Left ventricle myocardium superior (tissue), 1 donor: ENCODE measurements at regions of chr2 and their contacts with region 1.

Region 1: GRCh38 chr2:69026026-69026425 is 13.0 kb downstream of the ANTXR1 start:
- DNase-seq: no peak
- ATAC-seq: peak; percentile 83

Region 2: DNA sequence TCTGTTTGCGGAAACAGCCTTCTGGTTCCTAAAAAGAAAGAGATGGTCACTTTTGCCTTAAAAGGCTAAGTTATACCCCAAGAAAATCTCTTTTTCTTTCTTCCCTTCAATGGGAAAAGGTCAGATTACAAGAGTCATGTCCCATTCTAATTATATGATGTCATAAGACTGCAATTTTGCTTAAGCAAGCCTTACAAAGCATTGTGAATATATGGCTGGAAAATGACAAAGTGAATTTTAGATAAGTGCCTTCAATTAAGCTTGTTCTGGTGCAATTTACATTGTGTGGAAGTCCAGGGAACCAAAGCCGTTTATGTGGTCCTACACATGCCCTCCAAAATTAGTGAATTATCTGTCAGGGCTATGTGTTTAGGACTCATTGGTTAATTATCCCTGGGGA is 147.3 kb before region 1 on chr2:
- intact Hi-C with region 1: no loop called
- DNase-seq: no peak
- ATAC-seq: no peak

Region 3: DNA sequence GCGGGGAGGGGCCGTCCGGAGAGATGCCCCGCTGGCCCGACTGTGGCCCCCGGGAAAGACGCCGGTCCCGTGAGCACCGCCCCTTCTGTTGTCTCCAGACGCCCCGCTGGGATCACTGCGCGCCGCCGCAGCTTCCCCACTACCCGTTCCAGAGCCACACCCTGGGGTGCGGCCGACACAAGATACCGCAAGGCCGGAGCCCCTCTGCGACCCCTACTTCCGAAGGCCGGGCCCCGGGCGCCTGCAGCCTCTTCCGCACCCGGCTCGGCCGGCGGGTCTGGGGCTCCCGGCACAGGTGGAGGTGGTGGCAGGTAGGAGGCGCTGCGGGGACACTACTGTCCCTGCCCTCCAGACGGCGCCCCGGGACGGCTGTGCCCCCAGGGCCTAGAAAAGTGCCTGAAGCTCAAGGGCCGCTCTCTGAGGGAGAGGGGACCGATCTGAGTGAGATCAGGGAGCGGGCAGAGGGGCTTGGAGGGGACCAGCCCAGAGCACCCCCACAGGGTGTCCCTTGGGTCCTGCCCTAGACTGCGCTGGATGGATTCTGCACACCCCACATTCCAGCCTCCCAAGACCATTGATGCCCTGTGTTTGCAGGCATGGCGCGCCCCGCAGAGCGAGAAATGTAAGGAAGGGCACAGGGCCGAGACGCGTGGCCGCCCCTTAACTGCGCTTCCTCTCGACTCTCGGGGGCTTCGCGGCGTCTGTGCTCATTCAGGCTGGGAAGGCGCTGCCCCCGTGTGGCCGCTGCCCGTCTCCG is 281.0 kb after region 1 on chr2:
- intact Hi-C with region 1: loop called (anchors 5 kb)
- DNase-seq: peak; percentile 90
- ATAC-seq: peak; percentile 91